ENCODE measurements at regions of chr1 and their contacts with region 1.

Region 1: DNA sequence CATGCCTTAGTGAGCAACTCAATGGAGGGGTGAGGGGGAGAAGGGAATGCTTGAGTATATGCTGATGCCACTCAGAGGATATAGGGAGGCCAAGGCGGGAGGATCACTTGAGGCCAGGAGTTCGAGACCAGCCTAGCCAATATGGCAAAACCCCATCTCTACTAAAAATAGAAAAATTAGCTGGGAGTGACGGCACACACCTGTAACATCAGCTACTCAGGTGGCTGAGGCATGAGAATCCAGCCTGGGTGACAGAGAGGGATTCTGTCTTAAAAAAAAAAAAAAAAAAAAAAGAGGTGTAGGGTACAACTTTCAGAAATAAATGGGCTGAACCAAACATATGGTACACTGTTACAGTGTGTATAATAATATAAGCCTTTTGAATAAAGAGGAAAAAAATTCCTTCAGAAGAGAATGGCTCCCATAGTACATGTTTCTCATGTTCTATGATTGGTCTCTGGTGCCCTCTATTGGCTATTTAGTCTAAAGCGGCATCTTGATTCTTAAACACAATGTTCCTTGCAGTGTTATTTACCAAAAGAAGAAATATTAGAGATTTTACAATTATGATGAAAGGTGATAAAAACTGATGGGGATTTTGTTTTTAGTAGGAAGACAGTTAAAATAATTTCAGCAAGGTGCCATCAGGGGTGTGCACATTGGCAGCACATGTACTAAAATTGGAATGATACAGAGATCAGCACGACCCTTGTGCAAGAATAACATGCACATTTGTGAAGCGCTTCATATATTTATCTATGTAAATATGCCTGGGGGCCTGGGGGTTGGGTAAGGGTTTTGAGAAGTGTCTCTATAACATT is 109.8 kb downstream of the PATJ start:
- DNase-seq: peak in 1 of 5 donors; percentile 20
- ATAC-seq: peak in 3 of 4 donors; percentile 54 to 77 (median 72)
- H3K4me3 ChIP-seq: no peak overlapping the region
- H3K27ac ChIP-seq: no peak overlapping the region
- H3K4me1 ChIP-seq: peaks cover 0 to 5% (median 0%) of the 10 kb centered on the region in 12 donors
- H3K27me3 ChIP-seq: no peaks in the 10 kb centered on the region
- CTCF ChIP-seq: peak; percentile 53 to 84 (median 76)
- POLR2A ChIP-seq: no peak

Region 2: GRCh38 chr1:59971464-59971911 is 1880.6 kb before region 1 on chr1:
- intact Hi-C with region 1: loop called (anchors 5 to 10 kb)
- DNase-seq: peak; percentile 55 to 84 (median 68)
- ATAC-seq: peak; percentile 45 to 92 (median 88)
- H3K4me3 ChIP-seq: no peak overlapping the region
- H3K27ac ChIP-seq: no peak overlapping the region
- H3K4me1 ChIP-seq: peaks cover 0 to 8% (median 3%) of the 10 kb centered on the region in 12 donors
- H3K27me3 ChIP-seq: peaks cover 0 to 9% (median 0%) of the 10 kb centered on the region in 9 donors
- CTCF ChIP-seq: peak; percentile 81 to 93 (median 88)
- POLR2A ChIP-seq: no peak

Region 3: DNA sequence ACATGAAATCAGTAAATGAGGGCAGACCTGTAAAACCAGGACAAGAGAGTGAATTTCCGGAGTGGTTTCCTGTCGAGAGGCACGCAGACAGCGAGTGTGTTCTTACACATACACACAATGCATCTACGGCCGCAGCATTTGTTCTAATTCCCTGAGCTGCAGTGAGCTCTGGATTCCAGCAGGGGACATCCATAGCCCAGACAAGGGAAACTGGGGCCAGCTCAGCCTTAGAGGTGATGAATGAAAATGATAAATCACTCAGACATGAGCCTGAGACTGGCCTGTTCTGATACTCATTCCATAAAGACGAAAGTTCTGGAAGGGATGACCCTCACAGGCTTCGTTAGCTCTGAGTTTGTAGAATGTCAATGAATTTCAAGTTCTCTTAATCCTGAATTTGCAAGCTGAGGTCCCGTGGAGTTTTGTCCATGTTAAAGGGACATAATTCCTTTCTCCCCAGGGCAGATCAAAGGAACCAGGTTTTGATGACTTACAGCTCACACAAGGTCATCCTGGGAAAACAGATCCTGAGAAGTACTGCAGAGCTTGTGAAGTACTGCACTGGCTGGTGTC is 1570.6 kb before region 1 on chr1:
- intact Hi-C with region 1: loop called in 4 of 10 experiments (anchors 5 to 10 kb)
- DNase-seq: peak in 4 of 5 donors; percentile 43 to 72 (median 54)
- ATAC-seq: peak; percentile 87 to 97 (median 92)
- H3K4me3 ChIP-seq: no peak overlapping the region
- H3K27ac ChIP-seq: no peak overlapping the region
- H3K4me1 ChIP-seq: peaks cover 0 to 18% (median 8%) of the 10 kb centered on the region in 12 donors
- H3K27me3 ChIP-seq: no peaks in the 10 kb centered on the region
- CTCF ChIP-seq: peak; percentile 80 to 94 (median 90)
- POLR2A ChIP-seq: no peak

Region 4: DNA sequence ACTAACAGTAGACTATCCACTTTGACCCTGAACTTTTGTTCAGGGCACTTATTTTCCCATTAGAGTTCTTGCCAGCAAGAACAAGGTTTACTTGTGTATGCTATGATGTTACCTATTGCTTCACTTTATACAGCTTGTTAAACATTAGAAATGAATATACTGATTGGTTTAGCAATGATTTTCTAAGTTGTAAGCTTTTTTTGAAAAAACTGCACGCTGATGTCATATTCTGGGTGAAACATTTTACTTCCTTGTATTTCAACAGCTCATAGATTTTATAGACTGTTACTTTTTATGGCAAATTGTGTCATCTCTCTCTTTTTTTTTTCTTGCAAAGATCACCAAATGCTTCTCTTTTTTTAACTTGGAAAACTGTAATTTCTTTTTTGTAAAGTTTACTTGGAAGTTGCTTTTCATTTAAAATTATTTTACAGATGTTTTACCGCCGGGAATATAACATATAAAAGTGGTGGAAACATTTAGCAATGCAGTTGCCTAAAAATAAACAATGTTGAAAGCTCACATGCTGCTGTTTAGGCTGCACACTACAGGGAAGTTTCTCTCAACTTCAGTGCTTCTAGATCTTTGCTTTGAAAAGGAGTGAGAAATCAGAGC is 985.0 kb before region 1 on chr1:
- intact Hi-C with region 1: loop called in 1 of 10 experiments (anchors 10 kb)
- DNase-seq: no peak
- ATAC-seq: peak in 1 of 4 donors; percentile 50
- H3K4me3 ChIP-seq: peak overlapping the region in 4 of 12 donors; percentile 6 to 39 (median 36)
- H3K27ac ChIP-seq: peak overlapping the region in 3 of 12 donors; percentile 4 to 54 (median 43)
- H3K4me1 ChIP-seq: peaks cover 0 to 18% (median 9%) of the 10 kb centered on the region in 12 donors
- H3K27me3 ChIP-seq: no peaks in the 10 kb centered on the region
- CTCF ChIP-seq: no peak
- POLR2A ChIP-seq: no peak

Region 5: GRCh38 chr1:60978421-60979357 is 873.4 kb before region 1 on chr1:
- intact Hi-C with region 1: loop called in 6 of 10 experiments (anchors 5 to 10 kb)
- DNase-seq: no peak
- ATAC-seq: peak in 3 of 4 donors; percentile 47 to 74 (median 54)
- H3K4me3 ChIP-seq: no peak overlapping the region
- H3K27ac ChIP-seq: no peak overlapping the region
- H3K4me1 ChIP-seq: peaks cover 0 to 12% (median 2%) of the 10 kb centered on the region in 12 donors
- H3K27me3 ChIP-seq: no peaks in the 10 kb centered on the region
- CTCF ChIP-seq: peak; percentile 36 to 64 (median 42)
- POLR2A ChIP-seq: no peak

Region 6: DNA sequence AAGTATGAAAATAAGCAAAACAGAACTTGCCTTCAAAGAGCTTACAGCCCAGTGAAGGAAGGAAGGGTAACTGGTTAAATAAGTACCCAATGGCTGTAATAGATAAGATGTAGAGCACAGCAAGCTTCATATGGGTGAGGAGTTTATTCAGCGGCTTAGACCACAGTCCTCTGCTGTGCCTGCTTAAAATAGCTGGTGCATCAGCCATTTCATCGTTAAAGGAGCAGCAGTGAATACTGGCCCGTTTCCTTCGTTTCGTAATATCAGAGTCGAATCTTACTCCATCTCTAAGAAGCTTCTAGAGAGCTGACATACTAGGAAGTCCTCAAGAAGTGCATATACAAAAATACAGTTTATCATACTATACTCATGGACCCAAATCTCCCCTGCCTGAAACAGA is 483.2 kb before region 1 on chr1:
- intact Hi-C with region 1: loop called in 1 of 10 experiments (anchors 10 kb)
- DNase-seq: peak in 1 of 5 donors; percentile 37
- ATAC-seq: peak; percentile 81 to 94 (median 90)
- H3K4me3 ChIP-seq: peak overlapping the region in 3 of 12 donors; percentile 15 to 24 (median 18)
- H3K27ac ChIP-seq: peak overlapping the region in 7 of 12 donors; percentile 39 to 57 (median 45)
- H3K4me1 ChIP-seq: peaks cover 0 to 4% (median 0%) of the 10 kb centered on the region in 12 donors
- H3K27me3 ChIP-seq: no peaks in the 10 kb centered on the region
- CTCF ChIP-seq: no peak
- POLR2A ChIP-seq: no peak

Region 7: GRCh38 chr1:61641578-61642336 is 210.3 kb before region 1 on chr1:
- intact Hi-C with region 1: loop called in 1 of 10 experiments (anchors 5 kb)
- DNase-seq: peak; percentile 76 to 88 (median 78)
- ATAC-seq: peak; percentile 71 to 90 (median 86)
- H3K4me3 ChIP-seq: peak overlapping the region in 8 of 12 donors; percentile 3 to 50 (median 41)
- H3K27ac ChIP-seq: peak overlapping the region in 11 of 12 donors; percentile 45 to 88 (median 77)
- H3K4me1 ChIP-seq: peaks cover 0 to 41% (median 10%) of the 10 kb centered on the region in 12 donors
- H3K27me3 ChIP-seq: no peaks in the 10 kb centered on the region
- CTCF ChIP-seq: peak; percentile 62 to 89 (median 76)
- POLR2A ChIP-seq: no peak

Region 8: DNA sequence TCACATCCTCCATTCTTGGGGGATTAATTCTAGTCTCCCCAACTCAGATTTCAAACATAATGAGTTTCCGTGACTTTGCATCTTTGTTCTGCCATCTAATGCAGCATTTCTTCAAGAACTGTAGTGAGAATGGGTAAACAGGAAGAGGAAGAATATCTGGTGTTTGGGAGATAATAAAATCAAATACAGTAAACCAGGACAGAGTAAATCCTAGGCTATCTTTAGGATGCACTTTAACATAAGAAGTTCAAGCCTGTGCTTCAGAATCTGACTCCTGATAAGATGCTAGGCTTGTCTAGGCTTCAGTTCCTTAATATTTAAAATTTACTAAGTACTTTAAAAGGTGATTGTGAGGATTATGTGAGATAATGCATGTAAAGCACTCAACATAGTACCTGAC is 81.9 kb before region 1 on chr1:
- intact Hi-C with region 1: no loop called
- DNase-seq: no peak
- ATAC-seq: no peak
- H3K4me3 ChIP-seq: no peak overlapping the region
- H3K27ac ChIP-seq: no peak overlapping the region
- H3K4me1 ChIP-seq: no peaks in the 10 kb centered on the region
- H3K27me3 ChIP-seq: no peaks in the 10 kb centered on the region
- CTCF ChIP-seq: no peak
- POLR2A ChIP-seq: no peak

Region 9: DNA sequence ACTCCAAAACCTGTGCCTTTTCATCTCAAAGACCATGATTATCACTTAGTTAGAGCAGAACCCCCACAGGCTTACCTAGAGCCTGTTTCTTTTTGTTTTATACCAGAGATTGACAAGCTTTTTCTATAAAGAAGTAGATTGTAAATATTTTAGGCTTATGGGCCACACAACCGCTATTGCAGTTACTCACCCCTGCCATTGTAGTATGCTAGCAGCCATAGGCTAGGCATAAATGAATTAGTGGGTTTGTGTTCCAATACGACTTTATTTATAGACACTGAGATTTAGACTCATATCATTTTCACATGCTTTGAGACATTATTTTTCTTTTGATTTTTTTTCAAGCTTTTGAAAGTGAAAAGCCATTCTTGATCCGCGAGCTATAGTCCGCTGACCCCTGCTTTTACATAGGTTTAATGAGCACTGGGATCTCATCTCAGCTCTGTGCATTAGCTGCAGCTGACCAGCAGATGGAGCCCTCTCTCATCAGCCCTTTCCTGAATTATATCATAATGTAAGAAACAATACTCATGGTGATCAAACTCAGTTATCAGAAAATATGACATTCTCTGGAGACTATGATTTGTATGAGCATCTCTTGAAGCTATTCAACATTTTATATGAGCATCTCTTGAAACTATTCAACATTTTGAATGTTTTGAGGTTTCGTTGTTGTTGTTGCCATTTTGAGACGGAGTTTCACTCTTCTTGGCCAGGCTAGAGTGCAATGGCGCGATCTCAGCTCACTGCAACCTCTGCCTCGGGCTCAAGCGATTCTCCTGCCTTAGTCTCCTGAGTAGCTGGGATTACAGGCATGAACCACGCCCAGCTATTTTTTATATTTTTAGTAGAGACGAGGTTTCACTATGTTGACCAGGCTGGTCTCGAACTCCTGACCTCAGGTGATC is 230.7 kb after region 1 on chr1:
- intact Hi-C with region 1: no loop called
- DNase-seq: peak in 2 of 5 donors; percentile 15 to 28
- ATAC-seq: peak in 3 of 4 donors; percentile 38 to 60 (median 46)
- H3K4me3 ChIP-seq: no peak overlapping the region
- H3K27ac ChIP-seq: no peak overlapping the region
- H3K4me1 ChIP-seq: peaks cover 0 to 12% (median 4%) of the 10 kb centered on the region in 12 donors
- H3K27me3 ChIP-seq: no peaks in the 10 kb centered on the region
- CTCF ChIP-seq: peak; percentile 78 to 99 (median 86)
- POLR2A ChIP-seq: no peak